Breast epithelium (tissue), 4 donors: ENCODE measurements at regions of chr15 and their contacts with region 1.

Region 1: GRCh38 chr15:71089801-71090200 is 25.5 kb upstream of the THSD4 start:
- DNase-seq: no peak
- H3K4me3 ChIP-seq: no peak overlapping the region
- H3K27ac ChIP-seq: no peak overlapping the region
- H3K4me1 ChIP-seq: no peaks in the 10 kb centered on the region
- H3K27me3 ChIP-seq: no peaks in the 10 kb centered on the region
- CTCF ChIP-seq: no peak
- POLR2A ChIP-seq: no peak

Region 2: GRCh38 chr15:70936326-70936725 is 153.5 kb before region 1 on chr15:
- intact Hi-C with region 1: no loop called
- DNase-seq: no peak
- H3K4me3 ChIP-seq: no peak overlapping the region
- H3K27ac ChIP-seq: no peak overlapping the region
- H3K4me1 ChIP-seq: no peaks in the 10 kb centered on the region
- H3K27me3 ChIP-seq: no peaks in the 10 kb centered on the region
- CTCF ChIP-seq: no peak
- POLR2A ChIP-seq: no peak

Region 3: GRCh38 chr15:71051539-71051938 is 38.3 kb before region 1 on chr15:
- intact Hi-C with region 1: loop called (anchors 2 kb)
- DNase-seq: no peak
- H3K4me3 ChIP-seq: no peak overlapping the region
- H3K27ac ChIP-seq: no peak overlapping the region
- H3K4me1 ChIP-seq: no peaks in the 10 kb centered on the region
- H3K27me3 ChIP-seq: no peaks in the 10 kb centered on the region
- CTCF ChIP-seq: no peak
- POLR2A ChIP-seq: no peak

Region 4: DNA sequence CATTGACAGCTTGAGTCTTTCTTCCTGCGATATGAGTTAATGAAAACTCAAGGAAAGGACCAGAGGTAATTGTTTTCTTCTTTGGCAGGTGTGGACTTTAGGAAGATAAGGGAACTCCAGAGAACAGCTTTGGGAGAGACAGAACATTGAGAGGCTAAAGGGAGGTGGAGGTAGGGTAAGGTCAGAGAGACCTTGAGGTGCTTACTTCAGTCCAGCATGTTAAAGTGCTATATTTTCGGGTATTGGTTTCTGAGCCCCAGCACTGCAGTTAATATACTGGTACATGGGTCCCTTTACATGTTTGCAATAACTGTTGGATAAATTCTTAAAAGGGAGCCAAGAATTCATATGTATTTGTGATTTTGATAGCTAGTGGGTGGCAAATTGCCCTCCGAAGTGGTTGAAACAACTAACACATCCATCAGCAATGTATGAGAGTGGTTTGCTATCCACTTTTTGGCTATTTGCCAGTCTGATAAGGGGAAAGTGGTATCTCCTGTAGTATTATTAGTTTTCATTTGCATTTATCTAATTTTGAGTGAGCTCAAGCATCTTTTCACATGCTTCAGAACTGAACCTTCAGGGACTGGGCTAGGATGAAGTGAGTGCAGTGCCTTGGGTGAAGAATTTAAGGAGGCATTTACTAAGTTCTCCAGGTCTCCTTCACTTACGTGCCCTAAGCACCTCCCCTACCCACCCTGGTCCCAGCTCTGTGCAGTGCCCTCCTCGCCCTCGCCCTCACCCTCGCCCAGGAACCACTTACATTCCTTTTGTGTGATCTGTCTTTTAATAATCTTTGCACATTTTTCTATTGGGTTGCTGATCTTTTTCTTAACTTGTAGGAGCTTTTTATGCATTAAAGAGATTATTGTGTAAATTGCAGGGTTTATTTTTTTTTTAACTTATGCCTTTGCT is 347.9 kb after region 1 on chr15:
- intact Hi-C with region 1: no loop called
- DNase-seq: no peak
- H3K4me3 ChIP-seq: no peak overlapping the region
- H3K27ac ChIP-seq: no peak overlapping the region
- H3K4me1 ChIP-seq: no peaks in the 10 kb centered on the region
- H3K27me3 ChIP-seq: no peaks in the 10 kb centered on the region
- CTCF ChIP-seq: no peak
- POLR2A ChIP-seq: no peak